ENCODE measurements at regions of chr9 and their contacts with region 1.

Region 1: GRCh38 chr9:14768405-14769229 is 46.1 kb upstream of the CER1 start:
- DNase-seq: peak; percentile 18
- ATAC-seq: peak; percentile 55; the same call in 1 of the 2 replicates
- H3K4me3 Mint-ChIP-seq: no peak overlapping the region; the same call in 1 of the 2 replicates
- H3K27ac Mint-ChIP-seq: no peak overlapping the region
- H3K4me1 Mint-ChIP-seq: peaks cover 6% of the 10 kb centered on the region
- H3K27me3 Mint-ChIP-seq: no peaks in the 10 kb centered on the region
- CTCF ChIP-seq: peak; percentile 65

Region 2: DNA sequence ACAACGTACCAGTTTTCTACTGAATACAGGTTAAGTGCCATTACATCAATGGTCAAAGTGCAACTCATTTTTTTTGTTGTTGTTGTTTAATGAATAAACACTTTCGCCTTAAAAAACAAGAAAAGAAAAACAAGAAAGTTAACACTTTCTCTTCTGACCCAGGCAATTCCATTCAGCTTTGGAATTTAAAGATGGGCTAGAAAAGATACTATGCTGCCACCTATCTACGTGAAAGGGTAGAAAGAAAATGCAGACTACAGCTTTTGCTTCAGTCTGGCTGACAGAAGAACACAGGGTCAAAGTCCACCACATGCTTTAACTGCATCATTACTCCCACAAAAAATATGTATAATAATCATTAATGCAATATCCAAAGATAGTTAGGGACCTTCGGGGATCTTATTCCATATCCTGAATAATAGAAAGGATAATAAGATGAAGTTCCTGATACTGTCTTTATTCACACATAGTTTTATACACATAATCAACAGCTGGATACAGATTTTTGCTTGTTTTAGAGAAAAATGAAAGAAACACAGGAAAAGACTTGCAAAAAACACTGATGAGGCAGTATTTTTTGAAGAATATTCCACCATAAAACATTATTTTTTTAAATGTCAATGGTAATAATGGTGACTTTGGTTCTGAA is 115.8 kb before region 1 on chr9:
- CTCF ChIA-PET with region 1: interaction called, 13 read pairs
- POLR2A ChIA-PET with region 1: no interaction called
- DNase-seq: no peak
- ATAC-seq: peak; percentile 83
- H3K4me3 Mint-ChIP-seq: no peak overlapping the region
- H3K27ac Mint-ChIP-seq: no peak overlapping the region
- H3K4me1 Mint-ChIP-seq: peaks cover 5% of the 10 kb centered on the region; the same call in 1 of the 2 replicates
- H3K27me3 Mint-ChIP-seq: no peaks in the 10 kb centered on the region
- CTCF ChIP-seq: no peak

Region 3: GRCh38 chr9:14661421-14662059 is 107.1 kb before region 1 on chr9:
- CTCF ChIA-PET with region 1: interaction called, 10 read pairs
- POLR2A ChIA-PET with region 1: no interaction called
- DNase-seq: no peak
- ATAC-seq: no peak
- H3K4me3 Mint-ChIP-seq: no peak overlapping the region
- H3K27ac Mint-ChIP-seq: no peak overlapping the region
- H3K4me1 Mint-ChIP-seq: peaks cover 3% of the 10 kb centered on the region; the same call in 1 of the 2 replicates
- H3K27me3 Mint-ChIP-seq: no peaks in the 10 kb centered on the region
- CTCF ChIP-seq: peak; percentile 23; the same call in 1 of the 2 replicates

Region 4: GRCh38 chr9:14924899-14925235 is 156.2 kb after region 1 on chr9:
- CTCF ChIA-PET with region 1: no interaction called
- POLR2A ChIA-PET with region 1: no interaction called
- DNase-seq: no peak
- ATAC-seq: no peak
- H3K4me3 Mint-ChIP-seq: no peak overlapping the region
- H3K27ac Mint-ChIP-seq: no peak overlapping the region
- H3K4me1 Mint-ChIP-seq: no peaks in the 10 kb centered on the region
- H3K27me3 Mint-ChIP-seq: no peaks in the 10 kb centered on the region
- CTCF ChIP-seq: no peak